ENCODE measurements at regions of chr11 and their contacts with region 1.

Region 1: GRCh38 chr11:33324302-33324985 is 67.3 kb downstream of the HIPK3 start:
- DNase-seq: peak in 2 of 3 donors; percentile 20 to 46
- H3K4me3 ChIP-seq: no peak overlapping the region
- H3K4me3 Mint-ChIP-seq: peak overlapping the region in 1 of 2 donors; percentile 59
- H3K27ac ChIP-seq: peak overlapping the region in 1 of 2 donors; percentile 66
- H3K27ac Mint-ChIP-seq: peak overlapping the region; percentile 4 to 85 (median 83)
- H3K4me1 ChIP-seq: peaks cover 30 to 45% of the 10 kb centered on the region in 2 donors
- H3K4me1 Mint-ChIP-seq: peaks cover 38% of the 10 kb centered on the region
- H3K27me3 ChIP-seq: no peaks in the 10 kb centered on the region
- H3K27me3 Mint-ChIP-seq: no peaks in the 10 kb centered on the region
- CTCF ChIP-seq: no peak

Region 2: GRCh38 chr11:33015621-33016551 is 308.6 kb before region 1 on chr11 and contains the start of gene DEPDC7:
- intact Hi-C with region 1: no loop called
- DNase-seq: peak; percentile 78 to 86 (median 79)
- H3K4me3 ChIP-seq: peak within 1 kb of the TSS; percentile 47 to 78 (median 57)
- H3K4me3 Mint-ChIP-seq: peak within 1 kb of the TSS; percentile 87 to 92
- H3K27ac ChIP-seq: no peak within 1 kb of the TSS
- H3K27ac Mint-ChIP-seq: peak within 1 kb of the TSS in 2 of 7 donors; percentile 30 to 61
- H3K4me1 ChIP-seq: peaks cover 24 to 42% of the 10 kb centered on the region in 2 donors
- H3K4me1 Mint-ChIP-seq: peaks cover 29% of the 10 kb centered on the region
- H3K27me3 ChIP-seq: peaks cover 3 to 13% of the 10 kb centered on the region in 2 donors
- H3K27me3 Mint-ChIP-seq: peaks cover 5 to 13% (median 13%) of the 10 kb centered on the region in 3 donors
- CTCF ChIP-seq: no peak
- polyA plus RNA-seq, gene DEPDC7: 0.33 to 0.55 (median 0.48) TPM

Region 3: DNA sequence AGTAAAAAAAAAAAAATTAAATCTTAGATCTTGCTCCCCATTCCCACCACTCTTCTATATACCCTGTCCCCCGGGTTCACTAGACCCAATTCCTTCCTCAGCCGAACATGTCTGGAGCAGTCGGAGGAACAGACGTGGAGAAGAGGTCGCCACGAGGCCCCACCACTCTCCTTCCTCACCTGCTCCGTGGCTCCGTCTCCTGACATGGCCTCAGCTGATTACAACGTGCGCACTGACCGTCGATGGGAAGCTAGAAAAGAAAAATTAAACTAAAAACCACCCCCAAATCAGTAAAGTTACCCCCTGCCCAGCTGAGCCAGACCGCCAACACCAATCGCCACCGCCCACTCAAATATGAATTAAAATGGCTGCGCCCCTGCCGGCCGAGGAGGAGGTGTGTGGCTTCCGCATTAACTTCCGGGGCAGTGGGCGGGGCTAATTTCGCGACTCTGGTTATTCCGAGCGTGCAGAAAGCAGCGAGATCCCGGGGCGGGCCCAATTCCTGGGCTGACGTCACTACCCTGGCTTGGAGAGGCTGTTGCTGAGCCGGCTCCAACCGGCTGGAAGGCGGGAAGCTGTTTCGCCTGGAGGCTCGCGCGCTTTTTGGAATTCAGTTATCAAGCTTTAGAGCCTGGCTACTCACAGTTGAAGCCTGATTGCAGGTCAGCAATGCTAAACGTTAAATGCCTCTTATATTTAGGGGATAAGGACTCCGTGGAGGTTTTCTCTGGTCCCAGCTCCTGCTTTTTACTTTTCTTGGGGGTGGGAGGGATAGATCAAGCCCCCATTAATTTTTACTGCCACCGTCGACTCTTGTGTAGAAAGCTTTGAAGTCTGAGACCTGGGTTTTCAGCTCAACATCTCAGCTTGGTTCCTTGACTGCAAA is 163.1 kb before region 1 on chr11 and contains the start of gene CSTF3:
- intact Hi-C with region 1: loop called in 1 of 2 experiments (anchors 5 kb)
- DNase-seq: peak; percentile 95 to 99 (median 98)
- H3K4me3 ChIP-seq: peak within 1 kb of the TSS; percentile 89 to 100 (median 91)
- H3K4me3 Mint-ChIP-seq: peak within 1 kb of the TSS; percentile 100
- H3K27ac ChIP-seq: peak within 1 kb of the TSS; percentile 75 to 93
- H3K27ac Mint-ChIP-seq: peak within 1 kb of the TSS; percentile 90 to 100 (median 99)
- H3K4me1 ChIP-seq: peaks cover 31 to 44% of the 10 kb centered on the region in 2 donors
- H3K4me1 Mint-ChIP-seq: peaks cover 42% of the 10 kb centered on the region
- H3K27me3 ChIP-seq: no peaks in the 10 kb centered on the region
- H3K27me3 Mint-ChIP-seq: peaks cover 0 to 4% (median 3%) of the 10 kb centered on the region in 3 donors
- CTCF ChIP-seq: peak; percentile 36
- polyA plus RNA-seq, gene CSTF3: 6.9 to 12.1 (median 7.1) TPM